ENCODE measurements at regions of chr18 and their contacts with region 1.

Region 1: DNA sequence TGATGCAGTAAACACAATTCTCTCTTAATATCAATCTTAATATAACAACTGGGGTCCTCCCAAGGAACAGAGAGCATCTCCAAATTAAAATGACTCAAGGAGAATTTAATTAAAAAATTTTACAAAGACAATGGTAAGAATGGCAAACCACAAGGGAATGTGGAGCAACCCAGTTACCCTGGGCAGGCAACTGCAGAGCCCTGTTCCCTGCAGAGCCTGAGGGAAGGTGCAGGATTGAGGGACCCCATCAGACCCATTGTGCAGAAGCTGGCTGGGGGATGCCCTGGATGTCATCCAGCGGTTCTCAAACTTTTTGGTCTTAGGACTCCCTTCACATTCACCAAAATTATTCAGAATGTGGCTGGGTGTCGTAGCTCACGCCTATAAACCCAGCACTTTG is 262.8 kb downstream of the FBXO15 start:
- DNase-seq: no peak
- H3K4me3 ChIP-seq: no peak overlapping the region
- H3K27ac ChIP-seq: no peak overlapping the region
- H3K4me1 ChIP-seq: no peaks in the 10 kb centered on the region
- H3K27me3 ChIP-seq: no peaks in the 10 kb centered on the region
- CTCF ChIP-seq: no peak
- EP300 ChIP-seq: no peak
- POLR2A ChIP-seq: no peak
- RAD21 ChIP-seq: no peak

Region 2: DNA sequence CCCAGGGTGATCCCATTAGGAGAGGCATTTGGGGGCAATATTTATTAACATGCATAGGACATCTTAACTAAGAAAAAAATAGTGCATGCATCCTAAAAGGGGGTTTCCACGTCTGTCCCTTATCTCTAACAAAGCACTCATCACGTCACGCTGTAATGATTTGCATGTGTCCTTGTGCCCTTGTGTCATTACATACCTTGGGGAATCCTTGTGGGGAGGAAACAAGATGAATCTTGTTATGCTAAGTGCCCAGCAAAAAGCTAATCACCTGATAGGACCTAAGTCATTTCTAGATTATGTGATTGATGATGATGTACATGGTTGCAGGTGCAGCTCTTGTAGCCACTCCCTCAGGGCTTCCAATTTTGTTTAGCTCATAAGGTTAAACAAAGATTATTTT is 11.8 kb after region 1 on chr18:
- CTCF ChIA-PET with region 1: interaction called, 11 read pairs
- POLR2A ChIA-PET with region 1: no interaction called
- DNase-seq: no peak
- H3K4me3 ChIP-seq: no peak overlapping the region
- H3K27ac ChIP-seq: no peak overlapping the region
- H3K4me1 ChIP-seq: peaks cover 2 to 30% (median 12%) of the 10 kb centered on the region in 4 experiments; a peak in 5 of 7 replicates
- H3K27me3 ChIP-seq: peaks cover 0 to 17% (median under 1%) of the 10 kb centered on the region in 4 experiments; a peak in 5 of 7 replicates
- CTCF ChIP-seq: no peak
- EP300 ChIP-seq: no peak
- POLR2A ChIP-seq: no peak
- RAD21 ChIP-seq: no peak

Region 3: DNA sequence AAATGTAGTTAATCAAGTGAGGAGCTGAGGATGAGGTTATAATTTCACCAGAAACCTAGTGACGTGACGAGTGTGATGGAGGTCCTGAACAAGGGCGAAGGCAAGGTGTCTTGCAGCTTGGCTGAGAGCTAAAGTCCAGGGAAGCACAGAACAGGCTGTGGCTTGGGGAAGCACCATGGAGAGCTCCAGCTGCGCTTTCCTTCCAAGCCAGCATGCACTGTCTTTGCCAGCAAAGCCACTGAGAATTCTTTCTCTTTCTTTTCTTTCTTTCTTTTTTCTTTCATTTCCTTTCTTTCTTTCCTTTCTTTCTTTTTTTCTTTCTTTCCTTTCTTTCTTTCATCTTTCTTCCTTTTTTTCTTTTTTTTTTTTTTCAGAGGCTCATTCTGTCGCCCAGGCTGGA is 23.5 kb after region 1 on chr18:
- CTCF ChIA-PET with region 1: no interaction called
- POLR2A ChIA-PET with region 1: no interaction called
- DNase-seq: peak in 1 of 2 experiments; percentile 59
- H3K4me3 ChIP-seq: no peak overlapping the region
- H3K27ac ChIP-seq: no peak overlapping the region
- H3K4me1 ChIP-seq: no peaks in the 10 kb centered on the region
- H3K27me3 ChIP-seq: no peaks in the 10 kb centered on the region
- CTCF ChIP-seq: no peak
- EP300 ChIP-seq: no peak
- POLR2A ChIP-seq: no peak
- RAD21 ChIP-seq: 0 out of 4 replicates have a peak, but pooled peaks of 1 of the 2 experiments have one; percentile 3

Measured in H1 (cell line).